Ovary (tissue), 10 donors: ENCODE measurements at regions of chr4 and their contacts with region 1.

Region 1: DNA sequence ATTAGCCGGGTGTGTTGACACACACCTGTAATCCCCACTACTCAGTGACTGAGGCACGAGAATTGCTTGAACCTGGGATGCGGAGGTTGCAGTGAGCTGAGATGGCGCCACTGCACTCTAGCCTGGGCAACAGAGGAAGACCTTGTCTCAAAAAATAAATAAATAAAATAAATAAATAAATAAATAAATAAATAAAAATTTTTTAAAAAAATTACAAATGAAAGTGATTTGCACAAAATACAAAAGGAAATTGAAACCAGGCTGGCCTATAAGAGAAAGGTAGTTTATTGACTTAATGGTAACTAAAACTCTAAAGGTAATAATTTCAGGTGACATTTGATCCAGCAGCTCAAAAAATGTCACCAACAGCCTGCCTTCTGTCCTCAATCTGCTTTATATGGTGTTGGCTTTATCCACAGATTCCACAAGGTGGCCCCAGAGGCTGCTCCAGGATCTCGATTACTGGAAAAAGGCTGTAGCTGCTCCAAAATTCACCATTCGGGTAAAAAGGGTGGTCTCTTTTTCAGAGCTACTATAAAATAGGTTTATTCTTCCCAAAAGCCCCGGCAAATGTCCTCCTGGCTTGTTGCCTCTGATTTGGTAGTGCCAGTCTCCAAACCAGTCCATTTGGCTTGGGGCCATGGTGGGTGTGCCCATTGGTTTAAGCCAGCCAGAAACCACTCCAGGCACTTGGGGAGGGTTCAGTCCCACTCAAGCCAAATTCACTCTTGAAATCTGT is 61.4 kb upstream of the TRIM2 start:
- DNase-seq: peak; percentile 62 to 77 (median 74)
- H3K4me3 ChIP-seq: no peak overlapping the region
- H3K27ac ChIP-seq: no peak overlapping the region
- H3K4me1 ChIP-seq: no peaks in the 10 kb centered on the region
- H3K27me3 ChIP-seq: no peaks in the 10 kb centered on the region
- CTCF ChIP-seq: peak; percentile 79 to 89 (median 84)
- EP300 ChIP-seq: no peak
- POLR2A ChIP-seq: no peak

Region 2: DNA sequence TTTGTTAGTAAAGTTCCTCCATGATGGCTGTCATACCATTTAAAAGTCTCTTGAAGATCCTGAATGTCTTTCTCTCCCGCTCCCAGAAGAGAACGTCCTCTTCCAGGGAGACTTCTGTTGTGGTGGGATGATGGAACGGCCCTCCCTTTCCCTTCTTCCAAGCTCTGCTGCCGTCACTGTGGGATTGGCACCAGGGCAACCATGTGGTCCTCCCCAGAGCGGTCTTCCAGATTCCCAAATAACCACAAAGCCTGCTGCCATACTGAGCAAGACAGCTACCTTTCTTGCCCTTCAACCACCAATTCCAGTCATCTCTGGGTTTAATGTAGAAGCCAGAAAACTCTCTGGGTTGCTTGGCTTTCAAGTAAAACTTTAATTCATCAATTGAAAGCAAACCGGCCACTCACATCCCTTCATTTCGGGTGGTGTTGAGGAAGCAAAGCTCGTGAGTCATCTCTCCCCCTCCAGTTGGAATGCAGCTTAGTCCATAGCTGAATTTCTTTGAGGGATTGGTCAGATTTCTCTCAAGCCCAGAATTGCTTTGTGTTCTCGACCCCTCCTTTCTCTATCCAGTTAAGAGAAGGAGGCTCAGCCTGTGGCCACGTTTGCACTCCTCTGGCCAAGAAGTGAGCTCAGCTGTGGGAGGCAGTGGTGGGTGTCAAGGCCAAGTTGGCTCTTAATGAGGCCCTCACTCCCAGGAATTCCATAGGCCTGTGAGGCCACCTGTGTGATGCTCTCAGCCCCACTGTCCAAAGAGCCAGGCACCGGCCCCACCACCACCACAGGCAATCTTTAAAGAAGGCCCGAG is 169.8 kb before region 1 on chr4:
- intact Hi-C with region 1: no loop called
- DNase-seq: peak in 2 of 5 donors; percentile 52 to 68
- H3K4me3 ChIP-seq: no peak overlapping the region
- H3K27ac ChIP-seq: no peak overlapping the region
- H3K4me1 ChIP-seq: no peaks in the 10 kb centered on the region
- H3K27me3 ChIP-seq: no peaks in the 10 kb centered on the region
- CTCF ChIP-seq: no peak
- EP300 ChIP-seq: no peak
- POLR2A ChIP-seq: no peak

Region 3: GRCh38 chr4:153318696-153319320 is 175.9 kb after region 1 on chr4:
- intact Hi-C with region 1: loop called in 3 of 4 experiments (anchors 2 to 5 kb)
- DNase-seq: peak in 2 of 5 donors; percentile 37 to 47
- H3K4me3 ChIP-seq: no peak overlapping the region
- H3K27ac ChIP-seq: no peak overlapping the region
- H3K4me1 ChIP-seq: no peaks in the 10 kb centered on the region
- H3K27me3 ChIP-seq: no peaks in the 10 kb centered on the region
- CTCF ChIP-seq: peak; percentile 33 to 62 (median 55)
- EP300 ChIP-seq: no peak
- POLR2A ChIP-seq: no peak

Region 4: GRCh38 chr4:153326513-153326912 is 183.6 kb after region 1 on chr4:
- intact Hi-C with region 1: loop called in 1 of 4 experiments (anchors 5 kb)
- DNase-seq: no peak
- H3K4me3 ChIP-seq: no peak overlapping the region
- H3K27ac ChIP-seq: no peak overlapping the region
- H3K4me1 ChIP-seq: no peaks in the 10 kb centered on the region
- H3K27me3 ChIP-seq: no peaks in the 10 kb centered on the region
- CTCF ChIP-seq: no peak
- EP300 ChIP-seq: no peak
- POLR2A ChIP-seq: no peak

Region 5: DNA sequence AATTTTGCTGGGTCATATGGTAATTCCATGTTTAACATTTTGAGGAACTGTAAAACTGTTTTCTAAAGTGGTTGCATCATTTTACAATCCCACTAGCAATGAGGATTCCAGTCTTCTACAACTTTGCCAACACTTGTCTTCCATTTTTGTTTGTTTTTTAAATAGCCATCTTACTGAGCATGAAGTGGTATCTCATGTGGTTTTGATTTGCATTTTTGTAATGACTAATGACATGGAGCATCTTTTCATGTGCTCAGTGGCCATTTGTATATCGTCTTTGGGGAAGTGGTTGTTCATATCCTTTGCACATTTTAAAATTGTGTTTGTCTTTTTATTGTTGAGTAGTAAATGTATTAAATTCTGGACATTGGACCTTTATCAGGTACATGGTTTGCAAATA is 418.0 kb after region 1 on chr4:
- intact Hi-C with region 1: no loop called
- DNase-seq: no peak
- H3K4me3 ChIP-seq: no peak overlapping the region
- H3K27ac ChIP-seq: no peak overlapping the region
- H3K4me1 ChIP-seq: no peaks in the 10 kb centered on the region
- H3K27me3 ChIP-seq: no peaks in the 10 kb centered on the region
- CTCF ChIP-seq: no peak
- EP300 ChIP-seq: no peak
- POLR2A ChIP-seq: no peak

Region 6: DNA sequence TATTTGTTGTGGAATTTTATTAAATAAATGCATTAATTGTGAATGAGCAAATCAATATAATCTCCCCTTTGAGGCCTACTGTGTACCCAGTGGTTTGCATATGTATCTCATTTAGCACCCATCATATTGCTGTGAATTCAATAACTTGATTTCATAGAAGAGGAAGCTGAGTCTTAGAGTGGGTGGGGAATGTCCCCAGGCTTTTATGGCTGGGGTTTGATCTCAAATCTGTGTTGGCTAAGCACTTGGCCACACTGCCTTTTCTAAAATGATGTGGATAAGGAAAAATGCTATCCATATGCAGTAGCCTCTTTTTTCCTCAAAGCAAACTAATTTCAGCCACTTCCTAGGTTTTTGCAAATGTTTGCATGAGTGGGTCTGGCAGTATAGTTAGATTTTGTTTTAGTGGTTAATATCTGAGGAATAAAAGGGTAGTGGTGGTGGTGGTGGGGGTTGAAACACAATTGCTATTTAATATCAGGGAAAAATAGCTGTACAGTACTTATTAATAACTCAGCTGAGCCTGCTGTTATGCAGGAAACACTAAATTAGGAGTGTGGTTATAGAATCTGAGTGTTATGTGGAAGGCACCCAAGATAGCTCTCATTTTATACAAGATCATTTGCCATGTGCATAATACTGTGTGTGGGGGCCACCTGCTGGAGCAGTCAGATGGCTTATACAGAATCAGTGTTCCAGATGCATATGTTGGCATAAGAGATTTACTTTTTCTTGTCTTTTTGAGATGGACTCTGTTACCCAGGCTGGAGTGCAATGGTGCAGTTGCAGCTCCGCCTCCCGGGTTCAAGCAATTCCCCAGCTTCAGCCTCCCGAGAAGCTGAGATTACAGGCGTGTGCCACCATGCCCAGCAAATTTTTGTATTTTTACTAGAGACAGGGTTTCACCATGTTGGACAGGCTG is 431.3 kb after region 1 on chr4:
- intact Hi-C with region 1: loop called in 2 of 4 experiments (anchors 5 to 10 kb)
- DNase-seq: peak; percentile 41 to 68 (median 59)
- H3K4me3 ChIP-seq: no peak overlapping the region
- H3K27ac ChIP-seq: no peak overlapping the region
- H3K4me1 ChIP-seq: peaks cover 6% of the 10 kb centered on the region
- H3K27me3 ChIP-seq: no peaks in the 10 kb centered on the region
- CTCF ChIP-seq: peak in 2 of 3 donors; percentile 44
- EP300 ChIP-seq: no peak
- POLR2A ChIP-seq: no peak